SK-N-SH (cell line): ENCODE measurements at regions of chr14 and their contacts with region 1.

Region 1: DNA sequence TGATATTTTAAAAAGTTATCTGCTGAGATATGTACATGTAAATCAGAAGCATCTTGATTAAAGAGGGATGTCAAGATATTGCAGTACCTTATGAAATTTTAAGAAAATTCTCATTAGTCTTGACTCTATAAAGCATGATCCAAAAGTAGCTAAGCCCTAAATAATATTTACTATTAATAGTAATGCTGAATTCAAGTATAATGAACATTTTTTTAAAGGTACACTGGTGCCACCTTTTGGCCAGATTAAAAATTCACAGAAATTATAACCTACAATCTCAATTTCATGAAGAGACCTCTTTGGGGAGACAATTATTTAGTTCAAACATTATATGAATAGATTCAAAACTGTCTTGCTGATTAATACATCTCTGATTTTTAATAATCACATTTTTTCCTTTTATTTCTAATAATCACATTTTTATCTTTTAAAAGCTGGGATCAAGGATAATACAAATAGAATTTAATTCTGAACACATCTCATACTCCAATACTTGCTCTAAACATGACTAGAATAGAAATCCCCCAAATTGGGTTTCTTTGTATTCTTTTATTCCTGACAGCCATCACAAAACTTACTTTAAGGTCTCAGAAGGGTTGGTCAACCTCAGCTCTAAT is 13.4 kb downstream of the AKAP5 start:
- DNase-seq: peak; percentile 39
- H3K4me3 ChIP-seq: no peak overlapping the region
- H3K27ac ChIP-seq: no peak overlapping the region
- H3K4me1 ChIP-seq: peaks cover 0 to 2% of the 10 kb centered on the region in 2 experiments; a peak in 1 of 4 replicates
- H3K27me3 ChIP-seq: no peaks in the 10 kb centered on the region
- CTCF ChIP-seq: peak; percentile 73
- EP300 ChIP-seq: no peak
- RAD21 ChIP-seq: peak; percentile 73

Region 2: GRCh38 chr14:64438181-64438841 is 40.4 kb before region 1 on chr14:
- CTCF ChIA-PET with region 1: interaction called, 25 read pairs
- POLR2A ChIA-PET with region 1: no interaction called
- DNase-seq: no peak
- H3K4me3 ChIP-seq: no peak overlapping the region
- H3K27ac ChIP-seq: peak overlapping the region; percentile 73 to 86
- H3K4me1 ChIP-seq: peaks cover 5 to 7% of the 10 kb centered on the region in 2 experiments
- H3K27me3 ChIP-seq: no peaks in the 10 kb centered on the region
- CTCF ChIP-seq: no peak
- EP300 ChIP-seq: no peak; a peak in 1 of 4 replicates
- RAD21 ChIP-seq: no peak

Region 3: DNA sequence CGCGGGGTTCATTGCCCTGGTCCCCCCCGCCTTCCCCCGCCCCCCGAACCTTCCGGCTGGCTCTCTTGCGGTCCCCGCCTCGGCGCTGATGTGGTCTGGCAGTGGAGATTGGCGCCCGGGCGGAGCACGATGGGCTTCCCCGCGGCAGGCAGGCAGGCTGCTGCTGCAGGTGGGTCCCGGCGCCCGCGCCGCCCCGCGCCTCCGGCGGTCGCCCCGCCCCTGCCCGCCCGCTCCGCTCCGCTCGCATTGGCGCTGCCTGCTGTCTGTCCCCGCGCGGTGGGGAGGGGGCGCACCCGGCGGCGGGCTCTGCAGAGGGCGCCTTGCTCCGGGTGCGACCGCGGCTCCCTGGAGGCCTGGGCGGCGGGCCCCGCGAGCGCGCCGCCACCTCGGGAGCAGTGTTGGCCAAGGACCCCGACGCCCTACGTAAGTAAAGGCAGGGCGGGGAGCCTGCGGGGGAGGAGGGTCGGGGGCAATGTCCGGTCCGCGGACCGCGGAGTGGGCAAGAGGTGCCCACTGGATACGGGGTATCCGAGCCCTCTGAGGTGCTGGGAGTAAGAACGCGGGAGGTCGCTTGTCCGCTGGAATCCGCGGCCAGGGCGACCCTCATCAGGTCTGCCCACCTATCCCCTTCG is 13.4 kb before region 1 on chr14 and contains the start of gene AKAP5:
- CTCF ChIA-PET with region 1: interaction called, 16 read pairs
- POLR2A ChIA-PET with region 1: no interaction called
- DNase-seq: peak; percentile 96
- H3K4me3 ChIP-seq: peak within 1 kb of the TSS; percentile 68 to 73
- H3K27ac ChIP-seq: peak within 1 kb of the TSS; percentile 24 to 64; a peak in 2 of 4 replicates
- H3K4me1 ChIP-seq: peaks cover 0 to 13% of the 10 kb centered on the region in 2 experiments; a peak in 2 of 4 replicates
- H3K27me3 ChIP-seq: no peaks in the 10 kb centered on the region
- CTCF ChIP-seq: no peak
- EP300 ChIP-seq: no peak
- RAD21 ChIP-seq: no peak
- polyA plus RNA-seq, gene AKAP5: 0.28 and 0.36 TPM in 2 replicates

Region 4: GRCh38 chr14:64496764-64497163 is 18.0 kb after region 1 on chr14:
- CTCF ChIA-PET with region 1: interaction called, 23 read pairs
- POLR2A ChIA-PET with region 1: no interaction called
- DNase-seq: no peak
- H3K4me3 ChIP-seq: no peak overlapping the region
- H3K27ac ChIP-seq: no peak overlapping the region
- H3K4me1 ChIP-seq: peaks cover 12 to 13% of the 10 kb centered on the region in 2 experiments; a peak in 3 of 4 replicates
- H3K27me3 ChIP-seq: no peaks in the 10 kb centered on the region
- CTCF ChIP-seq: no peak
- EP300 ChIP-seq: no peak
- RAD21 ChIP-seq: no peak

Region 5: GRCh38 chr14:64510825-64511671 is 32.3 kb after region 1 on chr14:
- CTCF ChIA-PET with region 1: interaction called, 11 read pairs
- POLR2A ChIA-PET with region 1: no interaction called
- DNase-seq: peak; percentile 58
- H3K4me3 ChIP-seq: no peak overlapping the region; a peak in 1 of 4 replicates
- H3K27ac ChIP-seq: peak overlapping the region; percentile 10 to 53; a peak in 3 of 4 replicates
- H3K4me1 ChIP-seq: peaks cover 9 to 25% of the 10 kb centered on the region in 2 experiments; a peak in 3 of 4 replicates
- H3K27me3 ChIP-seq: no peaks in the 10 kb centered on the region
- CTCF ChIP-seq: peak; percentile 94
- EP300 ChIP-seq: no peak
- RAD21 ChIP-seq: peak; percentile 72

Region 6: DNA sequence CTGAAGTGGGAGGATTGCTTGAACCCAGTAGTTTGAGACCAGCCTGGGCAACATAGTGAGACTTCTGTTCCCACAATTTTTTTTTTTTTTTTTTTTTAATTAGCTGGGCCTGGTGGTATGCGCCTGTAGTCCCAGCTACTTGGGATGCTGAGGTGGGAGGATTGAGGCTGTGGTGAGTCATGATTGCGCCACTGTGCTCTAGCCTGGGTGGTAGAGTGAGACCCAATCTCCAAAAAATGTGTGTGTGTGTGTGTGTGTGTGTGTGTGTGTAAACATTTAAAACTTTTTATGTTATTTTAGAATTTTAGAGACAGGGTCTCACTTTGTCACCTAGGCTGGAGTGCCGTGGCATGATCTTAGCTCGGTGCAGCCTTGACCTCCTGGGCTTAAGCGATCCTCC is 77.8 kb after region 1 on chr14:
- CTCF ChIA-PET with region 1: no interaction called
- POLR2A ChIA-PET with region 1: no interaction called
- DNase-seq: no peak
- H3K4me3 ChIP-seq: no peak overlapping the region
- H3K27ac ChIP-seq: no peak overlapping the region
- H3K4me1 ChIP-seq: no peaks in the 10 kb centered on the region
- H3K27me3 ChIP-seq: no peaks in the 10 kb centered on the region
- CTCF ChIP-seq: no peak
- EP300 ChIP-seq: no peak
- RAD21 ChIP-seq: no peak

Region 7: GRCh38 chr14:64880221-64881121 is 401.7 kb after region 1 on chr14:
- CTCF ChIA-PET with region 1: no interaction called
- POLR2A ChIA-PET with region 1: no interaction called
- DNase-seq: peak; percentile 89
- H3K4me3 ChIP-seq: peak overlapping the region; percentile 54 to 60
- H3K27ac ChIP-seq: peak overlapping the region in 1 of 2 experiments; percentile 55; a peak in 2 of 4 replicates
- H3K4me1 ChIP-seq: peaks cover 0 to 17% of the 10 kb centered on the region in 2 experiments; a peak in 2 of 4 replicates
- H3K27me3 ChIP-seq: peaks cover 44% of the 10 kb centered on the region
- CTCF ChIP-seq: no peak
- EP300 ChIP-seq: no peak
- RAD21 ChIP-seq: no peak